PC-3 (cell line): ENCODE measurements at regions of chr16 and their contacts with region 1.

Region 1: DNA sequence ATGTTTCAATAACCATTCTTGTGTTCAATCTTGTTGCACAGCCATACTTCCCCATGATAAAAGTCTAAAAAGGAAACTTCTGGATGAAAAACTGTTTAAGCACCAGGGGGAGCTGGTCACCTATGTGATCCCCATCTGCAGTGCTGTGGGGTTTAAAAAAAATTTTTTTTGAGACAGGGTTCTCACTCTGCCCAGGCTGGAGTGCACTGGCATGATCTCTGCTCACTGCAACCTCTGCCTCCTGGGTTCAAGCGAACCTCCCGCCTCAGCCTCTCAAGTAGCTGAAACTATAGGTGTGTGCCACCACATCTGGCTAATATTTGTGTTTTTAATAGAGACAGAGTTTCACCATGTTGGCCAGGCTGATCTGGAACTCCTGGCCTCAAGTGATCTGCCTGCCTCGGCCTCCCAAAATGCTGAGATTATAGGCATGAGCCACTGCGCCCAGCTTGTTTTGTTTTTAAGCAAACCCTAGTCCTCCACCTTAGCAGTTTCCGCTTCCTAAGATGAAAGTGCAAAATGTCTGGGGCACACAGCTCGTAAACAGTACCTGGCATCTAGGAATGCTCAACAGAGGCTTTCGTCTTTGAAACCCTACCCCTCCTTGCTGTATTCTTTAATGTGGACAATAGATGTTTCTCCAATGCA is 25.4 kb downstream of the DNAJA2 start:
- DNase-seq: peak; percentile 53
- ATAC-seq: peak; percentile 69
- H3K4me3 ChIP-seq: no peak overlapping the region
- H3K27ac ChIP-seq: no peak overlapping the region
- H3K4me1 ChIP-seq: no peaks in the 10 kb centered on the region
- H3K27me3 ChIP-seq: no peaks in the 10 kb centered on the region
- CTCF ChIP-seq: peak; percentile 61

Region 2: GRCh38 chr16:47018223-47018891 is 70.3 kb after region 1 on chr16:
- CTCF ChIA-PET with region 1: no interaction called
- POLR2A ChIA-PET with region 1: no interaction called
- intact Hi-C with region 1: loop called (anchors 1 kb)
- DNase-seq: peak; percentile 70
- ATAC-seq: peak; percentile 100
- H3K4me3 ChIP-seq: no peak overlapping the region
- H3K27ac ChIP-seq: no peak overlapping the region
- H3K4me1 ChIP-seq: no peaks in the 10 kb centered on the region
- H3K27me3 ChIP-seq: no peaks in the 10 kb centered on the region
- CTCF ChIP-seq: peak; percentile 54